ENCODE measurements at regions of chr10 and their contacts with region 1.

Region 1: DNA sequence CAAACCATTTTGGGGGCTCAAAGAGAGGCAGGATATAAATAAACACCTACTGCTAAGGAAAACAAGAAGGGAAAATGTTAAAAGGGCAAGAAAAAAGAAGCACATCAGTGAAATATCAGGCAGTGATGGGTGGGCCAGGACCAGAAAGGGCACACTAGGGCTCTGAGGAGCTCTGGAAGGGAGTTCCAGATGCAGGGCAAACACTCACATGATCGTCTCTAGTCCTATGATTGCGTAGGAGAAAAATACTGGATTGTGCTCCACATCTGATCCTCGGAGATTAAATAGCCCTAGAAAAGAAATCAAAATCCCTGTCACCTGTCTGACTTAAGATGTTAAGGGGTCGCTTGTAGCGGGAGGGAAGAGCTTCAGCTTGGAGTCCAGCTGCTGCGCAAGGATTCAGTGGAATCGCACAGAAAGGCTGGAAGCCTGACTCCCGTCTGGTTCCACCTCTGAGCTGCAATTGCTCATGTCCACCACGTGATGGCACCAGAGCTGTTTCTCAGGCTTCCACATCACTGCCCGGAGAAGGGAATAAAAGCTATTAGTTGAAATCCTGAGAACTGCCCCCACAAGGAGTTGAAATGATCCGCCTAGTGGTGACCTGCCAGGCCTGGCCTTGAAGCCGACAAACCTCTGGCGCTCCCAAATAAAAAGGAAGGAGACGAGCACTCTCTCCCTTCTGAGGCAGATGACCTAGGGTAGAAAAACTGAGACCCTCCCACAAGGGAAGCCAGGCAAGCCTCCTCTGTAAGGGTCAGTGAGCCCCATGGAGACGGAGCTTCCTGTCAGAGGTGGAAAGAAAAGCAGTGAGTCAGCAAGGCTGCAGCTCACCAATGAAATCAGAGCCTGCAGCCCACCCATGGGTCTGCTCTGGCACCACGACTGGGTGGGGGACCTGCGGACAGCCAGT is 39.2 kb downstream of the XPNPEP1 start:
- DNase-seq: peak; percentile 84
- ATAC-seq: peak; percentile 94
- H3K4me3 Mint-ChIP-seq: peak overlapping the region; percentile 42
- H3K27ac Mint-ChIP-seq: peak overlapping the region; percentile 94
- H3K4me1 Mint-ChIP-seq: peaks cover 12% of the 10 kb centered on the region
- H3K27me3 Mint-ChIP-seq: no peaks in the 10 kb centered on the region; the same call in 1 of the 2 replicates
- CTCF ChIP-seq: peak; percentile 88

Region 2: GRCh38 chr10:109894516-109894915 is 10.4 kb after region 1 on chr10:
- CTCF ChIA-PET with region 1: interaction called, 56 read pairs
- POLR2A ChIA-PET with region 1: interaction called, 3 read pairs
- DNase-seq: no peak
- ATAC-seq: no peak
- H3K4me3 Mint-ChIP-seq: no peak overlapping the region
- H3K27ac Mint-ChIP-seq: no peak overlapping the region
- H3K4me1 Mint-ChIP-seq: peaks cover 37% of the 10 kb centered on the region
- H3K27me3 Mint-ChIP-seq: no peaks in the 10 kb centered on the region
- CTCF ChIP-seq: no peak

Region 3: DNA sequence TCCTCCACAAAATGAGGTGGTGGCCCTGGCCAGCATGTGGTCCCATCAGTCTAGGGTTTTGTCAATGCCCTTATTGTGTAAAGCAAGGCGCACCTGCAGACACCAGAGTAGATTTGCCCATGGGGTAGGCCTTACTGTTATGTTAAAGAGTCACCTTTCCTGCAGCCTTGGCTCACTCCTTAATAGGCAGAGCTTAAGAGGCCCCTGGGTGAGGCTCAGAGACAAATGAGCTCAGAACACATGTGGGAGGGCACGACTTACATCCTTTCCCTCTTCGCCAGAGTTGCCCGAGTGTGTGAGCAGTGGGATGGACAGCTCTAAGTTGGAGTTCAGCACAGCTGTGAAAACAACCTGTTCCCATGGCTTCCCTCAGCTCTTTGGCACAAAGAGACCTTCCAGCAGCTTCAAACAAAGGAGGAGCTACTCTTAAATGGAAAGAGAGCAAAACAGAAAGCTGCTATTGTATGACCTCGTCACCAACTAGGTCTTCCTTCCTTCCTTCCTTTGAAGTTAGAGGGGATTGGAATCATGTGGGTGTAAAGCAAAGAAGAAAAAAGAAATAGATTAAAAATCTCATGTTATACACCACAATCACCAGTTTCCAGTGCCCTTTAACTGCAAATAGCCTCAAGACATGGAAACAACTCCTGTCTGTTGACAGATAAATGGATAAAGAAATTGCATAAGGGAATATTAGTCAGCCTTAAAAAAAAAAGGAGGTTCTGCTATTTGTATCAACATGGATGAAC is 51.0 kb after region 1 on chr10:
- CTCF ChIA-PET with region 1: interaction called, 41 read pairs
- POLR2A ChIA-PET with region 1: interaction called, 13 read pairs
- DNase-seq: peak; percentile 59
- ATAC-seq: peak; percentile 96
- H3K4me3 Mint-ChIP-seq: peak overlapping the region; percentile 48
- H3K27ac Mint-ChIP-seq: peak overlapping the region; percentile 98
- H3K4me1 Mint-ChIP-seq: peaks cover 68% of the 10 kb centered on the region
- H3K27me3 Mint-ChIP-seq: 0 out of 2 replicates have a peak, but pooled peaks cover 4% of the 10 kb centered on the region
- CTCF ChIP-seq: no peak

Region 4: GRCh38 chr10:109987452-109988211 is 103.5 kb after region 1 on chr10:
- CTCF ChIA-PET with region 1: interaction called, 16 read pairs
- POLR2A ChIA-PET with region 1: no interaction called
- DNase-seq: no peak
- ATAC-seq: peak; percentile 81
- H3K4me3 Mint-ChIP-seq: no peak overlapping the region
- H3K27ac Mint-ChIP-seq: no peak overlapping the region
- H3K4me1 Mint-ChIP-seq: peaks cover 5% of the 10 kb centered on the region; the same call in 1 of the 2 replicates
- H3K27me3 Mint-ChIP-seq: no peaks in the 10 kb centered on the region
- CTCF ChIP-seq: no peak

Region 5: DNA sequence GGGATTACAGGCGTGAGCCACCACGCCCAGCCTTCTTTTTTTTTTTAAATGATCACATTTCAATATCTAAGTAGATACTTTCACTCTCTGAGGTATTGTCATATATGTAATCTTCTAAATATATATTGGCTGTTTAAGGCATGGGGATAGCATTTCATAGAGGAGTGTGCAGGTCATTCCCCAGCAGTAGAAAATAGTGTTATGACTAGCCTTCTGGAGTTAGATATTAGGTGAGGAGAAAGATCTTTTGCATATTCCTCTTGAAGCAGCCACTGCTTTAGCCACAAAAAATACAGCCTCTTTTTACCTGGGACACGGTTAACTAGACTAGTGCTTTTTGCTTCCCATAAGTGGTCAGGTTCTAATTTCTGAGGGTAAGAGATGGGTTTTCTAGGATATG is 152.5 kb after region 1 on chr10:
- CTCF ChIA-PET with region 1: interaction called, 31 read pairs
- POLR2A ChIA-PET with region 1: interaction called, 5 read pairs
- DNase-seq: no peak
- ATAC-seq: no peak
- H3K4me3 Mint-ChIP-seq: no peak overlapping the region
- H3K27ac Mint-ChIP-seq: no peak overlapping the region
- H3K4me1 Mint-ChIP-seq: peaks cover 57% of the 10 kb centered on the region
- H3K27me3 Mint-ChIP-seq: no peaks in the 10 kb centered on the region
- CTCF ChIP-seq: no peak

Region 6: GRCh38 chr10:110129490-110129889 is 245.4 kb after region 1 on chr10:
- CTCF ChIA-PET with region 1: interaction called, 35 read pairs
- POLR2A ChIA-PET with region 1: no interaction called
- DNase-seq: no peak
- ATAC-seq: peak; percentile 41
- H3K4me3 Mint-ChIP-seq: no peak overlapping the region
- H3K27ac Mint-ChIP-seq: 0 out of 2 replicates have a peak overlapping the region, but pooled peaks have one; percentile 17
- H3K4me1 Mint-ChIP-seq: peaks cover 12% of the 10 kb centered on the region
- H3K27me3 Mint-ChIP-seq: no peaks in the 10 kb centered on the region
- CTCF ChIP-seq: no peak

Region 7: GRCh38 chr10:110225756-110226542 is 341.8 kb after region 1 on chr10:
- CTCF ChIA-PET with region 1: interaction called, 10 read pairs
- POLR2A ChIA-PET with region 1: no interaction called
- DNase-seq: peak; percentile 90
- ATAC-seq: peak; percentile 65
- H3K4me3 Mint-ChIP-seq: peak overlapping the region; percentile 96
- H3K27ac Mint-ChIP-seq: peak overlapping the region; percentile 98
- H3K4me1 Mint-ChIP-seq: peaks cover 40% of the 10 kb centered on the region
- H3K27me3 Mint-ChIP-seq: peaks cover 27% of the 10 kb centered on the region
- CTCF ChIP-seq: peak; percentile 56

Measured in WTC11 (cell line).